Activated CD4-positive, alpha-beta T cell treated with anti-CD3 and anti-CD28 coated beads, Interleukin-2, amount 10 ng/mL, durations not matched to agents 24 days and 14 days (primary cell): ENCODE measurements at regions of chr9 and their contacts with region 1.

Region 1: DNA sequence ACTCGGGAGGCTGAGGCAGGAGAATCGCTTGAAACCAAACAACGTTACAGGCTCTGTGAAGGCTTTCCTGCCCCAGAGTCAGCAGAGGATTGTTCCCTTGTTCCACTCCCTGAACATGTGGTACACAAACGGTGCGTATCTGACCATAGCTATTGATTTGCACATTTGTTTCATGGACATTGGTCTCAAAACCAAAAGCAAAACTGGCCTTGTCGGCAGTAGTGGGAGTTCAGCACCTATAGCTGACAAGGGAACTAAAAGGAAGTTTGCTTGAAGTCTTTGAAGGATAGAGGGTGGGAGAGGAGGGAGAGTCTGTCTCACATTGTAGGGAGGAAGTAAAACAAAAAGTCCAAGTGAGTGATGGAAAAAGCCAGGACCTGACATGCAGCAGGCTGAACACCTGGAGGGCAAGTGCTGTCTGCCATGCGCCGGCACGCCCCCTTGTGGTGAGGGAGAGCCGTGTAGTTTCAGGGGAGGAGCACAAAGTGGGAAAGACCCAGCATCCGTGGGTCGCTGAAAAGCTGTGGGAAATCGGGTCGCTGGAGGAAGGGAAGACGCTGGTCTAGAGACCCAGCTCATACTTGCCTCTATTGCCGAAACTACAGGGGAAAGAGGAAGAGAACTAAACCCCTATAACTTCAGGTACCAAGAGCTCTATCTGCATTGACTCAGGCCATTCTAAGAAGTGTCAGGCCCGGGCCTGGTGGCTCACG is 58.0 kb downstream of the RAD23B start:
- DNase-seq: peak; percentile 94
- H3K4me3 Mint-ChIP-seq: no peak overlapping the region
- H3K27ac Mint-ChIP-seq: peak overlapping the region; percentile 6
- H3K4me1 Mint-ChIP-seq: peaks cover 9% of the 10 kb centered on the region
- H3K27me3 Mint-ChIP-seq: no peaks in the 10 kb centered on the region

Region 2: DNA sequence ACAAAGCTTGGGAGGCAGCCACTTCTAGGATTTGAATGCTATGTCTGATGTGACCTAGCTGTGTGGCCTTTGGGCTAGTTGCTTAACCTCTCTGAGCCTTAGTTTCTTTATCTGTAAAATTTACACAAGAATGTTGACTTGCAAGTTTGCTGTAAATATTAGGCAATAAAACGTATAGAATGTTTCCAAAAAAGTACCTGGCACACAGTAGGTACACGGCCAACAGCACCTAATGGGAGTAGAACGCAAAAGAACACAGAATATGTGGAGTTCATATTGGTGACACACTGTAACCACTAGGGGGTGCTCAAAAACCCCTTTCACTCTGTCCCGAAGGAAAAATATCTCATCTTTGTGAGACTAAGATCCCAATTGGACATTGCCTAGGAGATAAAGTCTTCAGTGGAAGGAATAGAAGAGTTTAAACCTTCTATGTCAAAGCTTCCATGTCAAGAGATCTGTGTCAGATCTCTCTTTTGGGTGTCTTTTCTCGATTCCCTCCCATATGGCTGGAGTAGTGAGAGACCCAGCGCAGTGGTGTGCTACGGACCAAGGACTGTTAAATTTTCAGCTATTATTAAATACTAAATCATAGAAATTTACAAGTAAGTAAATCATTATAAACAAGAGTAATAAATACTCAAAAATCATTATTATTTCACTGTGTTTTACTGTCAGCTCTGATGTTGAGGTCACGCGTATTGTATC is 203.4 kb before region 1 on chr9:
- intact Hi-C with region 1: loop called (anchors 1 kb)
- DNase-seq: peak; percentile 60
- H3K4me3 Mint-ChIP-seq: no peak overlapping the region
- H3K27ac Mint-ChIP-seq: no peak overlapping the region
- H3K4me1 Mint-ChIP-seq: no peaks in the 10 kb centered on the region
- H3K27me3 Mint-ChIP-seq: no peaks in the 10 kb centered on the region

Region 3: DNA sequence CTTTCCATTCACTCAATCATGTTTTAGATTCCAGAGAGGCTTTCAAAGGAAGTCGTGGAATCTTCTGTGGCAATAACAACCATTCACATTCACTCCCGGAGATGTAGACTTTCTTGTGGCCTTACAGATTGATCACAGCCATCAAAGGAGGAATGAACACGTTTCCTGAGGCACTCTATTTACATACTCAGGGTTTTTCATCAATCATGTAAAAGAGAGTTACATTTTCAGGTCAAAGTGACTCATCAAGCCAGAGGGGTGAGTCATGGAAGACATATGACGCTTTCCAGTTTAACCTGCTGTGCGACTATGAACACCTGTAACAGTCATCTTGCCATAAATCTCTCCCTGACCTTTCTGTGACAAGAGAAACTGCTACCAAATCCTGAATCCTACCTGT is 97.3 kb before region 1 on chr9:
- intact Hi-C with region 1: loop called (anchors 5 kb)
- DNase-seq: peak; percentile 68
- H3K4me3 Mint-ChIP-seq: no peak overlapping the region
- H3K27ac Mint-ChIP-seq: peak overlapping the region; percentile 74
- H3K4me1 Mint-ChIP-seq: peaks cover 17% of the 10 kb centered on the region
- H3K27me3 Mint-ChIP-seq: no peaks in the 10 kb centered on the region

Region 4: DNA sequence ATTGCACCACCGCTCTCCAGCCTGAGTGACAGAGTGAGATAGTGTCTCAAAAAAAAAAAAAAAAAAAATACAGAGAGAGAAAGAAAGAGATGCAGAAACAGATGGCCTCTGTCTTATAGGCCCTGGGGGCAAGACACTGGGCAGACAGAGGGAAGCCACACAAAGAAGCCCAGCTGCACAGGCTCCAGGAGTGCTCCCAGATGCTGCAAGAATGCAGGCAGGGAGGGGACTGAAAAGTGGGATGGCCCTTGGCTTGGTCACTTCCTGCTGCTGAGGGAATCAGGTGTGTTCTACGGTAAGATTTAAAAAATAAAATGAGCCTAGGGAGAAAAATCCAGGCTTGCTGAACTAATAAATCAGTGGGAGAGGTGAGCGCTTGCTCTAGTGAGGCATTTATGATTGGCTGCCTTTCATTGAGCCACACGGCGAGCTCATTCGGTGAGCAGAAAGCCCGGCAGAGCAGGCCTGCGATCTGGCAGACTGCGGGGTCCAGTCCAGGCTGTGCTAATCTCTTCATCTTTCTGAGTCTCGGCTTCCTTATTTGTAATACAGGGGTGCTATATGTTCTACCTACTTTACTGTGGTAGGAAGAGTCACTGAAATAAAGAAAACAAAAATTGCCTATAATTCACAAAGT is 22.6 kb after region 1 on chr9:
- intact Hi-C with region 1: no loop called
- DNase-seq: no peak
- H3K4me3 Mint-ChIP-seq: no peak overlapping the region
- H3K27ac Mint-ChIP-seq: no peak overlapping the region
- H3K4me1 Mint-ChIP-seq: peaks cover 2% of the 10 kb centered on the region
- H3K27me3 Mint-ChIP-seq: no peaks in the 10 kb centered on the region